ENCODE measurements at regions of chr16 and their contacts with region 1.

Region 1: DNA sequence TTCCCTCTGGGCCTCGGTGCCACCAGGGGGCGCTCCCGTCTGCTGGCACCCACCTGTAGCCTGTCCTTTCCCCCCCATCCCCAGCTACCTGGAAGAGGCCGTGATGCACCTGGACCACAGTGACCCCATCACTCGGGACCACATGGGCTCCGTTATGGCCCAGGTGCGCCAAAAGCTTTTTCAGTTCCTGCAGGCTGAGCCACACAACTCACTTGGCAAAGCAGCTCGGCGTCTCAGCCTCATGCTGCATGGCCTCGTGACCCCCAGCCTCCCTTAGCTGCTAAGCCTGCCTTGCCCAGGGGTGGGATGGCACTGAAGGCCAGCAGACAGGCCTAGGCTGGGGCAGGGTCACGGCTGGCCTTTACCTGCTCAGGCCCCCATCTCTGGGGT is 818 bp upstream of the NRN1L start:
- DNase-seq: no peak
- H3K4me3 ChIP-seq: no peak overlapping the region
- H3K27me3 ChIP-seq: no peaks in the 10 kb centered on the region
- CTCF ChIP-seq: peak; percentile 90

Region 2: GRCh38 chr16:67767953-67768352 is 115.9 kb before region 1 on chr16:
- CTCF ChIA-PET with region 1: no interaction called
- POLR2A ChIA-PET with region 1: no interaction called
- DNase-seq: peak; percentile 26
- H3K4me3 ChIP-seq: no peak overlapping the region
- H3K27me3 ChIP-seq: no peaks in the 10 kb centered on the region
- CTCF ChIP-seq: no peak

Region 3: DNA sequence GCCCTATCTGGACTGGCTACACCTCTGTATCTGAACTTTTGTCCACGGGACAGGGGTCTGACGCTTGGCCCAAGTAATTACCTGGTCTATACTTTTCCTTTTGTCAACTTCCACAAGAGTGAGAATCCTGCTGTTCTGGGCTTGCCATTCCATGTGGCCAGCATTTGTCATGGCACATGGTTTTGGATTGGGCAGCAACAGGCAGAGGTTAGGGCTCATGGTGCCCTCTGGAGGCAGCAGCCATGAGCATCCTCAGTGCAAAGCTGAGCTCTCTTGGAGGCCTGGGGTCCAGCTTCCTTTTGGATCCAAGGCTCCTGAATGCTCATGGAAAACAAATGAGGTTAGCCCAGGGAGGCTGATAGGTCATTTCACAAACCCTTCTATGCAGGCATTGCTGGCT is 18.6 kb before region 1 on chr16:
- CTCF ChIA-PET with region 1: interaction called, 16 read pairs
- POLR2A ChIA-PET with region 1: no interaction called
- DNase-seq: no peak
- H3K4me3 ChIP-seq: no peak overlapping the region
- H3K27me3 ChIP-seq: no peaks in the 10 kb centered on the region
- CTCF ChIP-seq: peak; percentile 46

Region 4: GRCh38 chr16:67910158-67910557 is 26.3 kb after region 1 on chr16:
- CTCF ChIA-PET with region 1: interaction called, 32 read pairs
- POLR2A ChIA-PET with region 1: interaction called, 3 read pairs
- DNase-seq: no peak
- H3K4me3 ChIP-seq: no peak overlapping the region
- H3K27me3 ChIP-seq: no peaks in the 10 kb centered on the region
- CTCF ChIP-seq: no peak

Region 5: GRCh38 chr16:67935402-67936123 is 51.7 kb after region 1 on chr16:
- CTCF ChIA-PET with region 1: interaction called, 155 read pairs
- POLR2A ChIA-PET with region 1: no interaction called
- DNase-seq: peak; percentile 59
- H3K4me3 ChIP-seq: peak overlapping the region; percentile 84
- H3K27me3 ChIP-seq: no peaks in the 10 kb centered on the region
- CTCF ChIP-seq: no peak

Region 6: GRCh38 chr16:68040507-68041288 is 156.8 kb after region 1 on chr16:
- CTCF ChIA-PET with region 1: interaction called, 24 read pairs
- POLR2A ChIA-PET with region 1: no interaction called
- DNase-seq: no peak
- H3K4me3 ChIP-seq: no peak overlapping the region
- H3K27me3 ChIP-seq: no peaks in the 10 kb centered on the region
- CTCF ChIP-seq: peak; percentile 85